AG04450 (cell line): ENCODE measurements at regions of chr9 and their contacts with region 1.

Region 1: DNA sequence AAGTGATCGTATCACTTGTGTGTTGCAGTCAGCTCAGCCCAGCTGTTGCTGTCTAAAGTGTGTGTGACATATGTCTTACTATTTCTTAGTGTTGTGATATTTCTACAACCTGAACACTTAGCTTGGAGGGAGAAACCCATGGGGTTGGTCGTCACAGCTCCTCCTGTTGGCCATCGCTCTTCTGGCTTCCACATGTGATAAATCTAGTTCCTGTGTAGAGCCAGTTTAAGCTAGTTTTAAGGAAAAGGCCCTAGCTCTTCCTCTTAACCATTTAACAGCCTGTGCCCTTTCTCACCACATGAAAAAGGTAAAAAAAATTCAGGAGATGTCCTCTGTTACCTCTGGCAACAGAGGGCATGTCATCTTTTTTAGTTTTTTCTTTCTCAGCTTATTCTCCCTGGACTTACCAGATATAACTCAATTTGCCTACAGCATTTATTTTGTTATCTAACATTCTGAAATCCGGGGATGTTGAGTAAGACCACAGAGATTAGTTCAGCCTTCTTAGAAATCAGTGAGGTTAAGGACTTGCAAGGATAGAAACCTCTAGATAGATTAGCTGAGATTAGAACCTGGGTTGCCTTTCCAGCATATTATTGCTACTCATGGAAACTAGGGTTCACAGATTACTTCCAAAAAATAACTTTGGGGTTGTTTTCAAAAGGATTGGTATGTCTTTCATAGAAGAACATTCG is 100.4 kb downstream of the GAPVD1 start:
- DNase-seq: no peak
- H3K4me3 ChIP-seq: no peak overlapping the region
- H3K27ac ChIP-seq: no peak overlapping the region
- H3K27me3 ChIP-seq: no peaks in the 10 kb centered on the region
- CTCF ChIP-seq: peak; percentile 43

Region 2: DNA sequence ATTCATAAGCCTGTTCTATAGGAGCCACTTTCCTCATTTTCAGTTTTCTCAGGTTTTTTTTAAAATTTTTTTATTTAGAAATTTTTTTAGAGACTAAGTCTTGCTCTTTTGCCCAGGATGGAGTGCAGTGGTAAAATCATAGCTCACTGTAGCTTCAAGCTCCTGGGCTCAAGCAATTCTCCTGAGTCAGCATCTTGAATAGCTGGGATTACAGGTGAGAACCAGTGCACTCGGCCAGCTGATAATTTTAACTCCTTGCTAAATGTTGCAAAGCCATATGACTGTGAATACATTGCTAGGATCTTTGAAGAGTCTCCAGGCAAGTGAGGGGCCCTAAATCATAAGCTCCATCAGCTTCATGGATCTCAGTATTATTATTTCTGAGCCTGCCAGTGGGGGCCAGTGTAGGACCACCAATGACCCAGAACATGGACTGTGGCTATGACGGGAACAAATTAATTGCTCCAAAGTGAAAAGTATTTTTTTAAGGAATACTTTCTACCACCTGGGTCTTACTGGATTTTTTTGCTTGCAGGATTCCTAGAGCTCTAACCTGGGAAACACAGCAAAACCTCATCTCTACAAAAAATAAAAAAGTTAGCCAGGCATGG is 106.1 kb before region 1 on chr9:
- CTCF ChIA-PET with region 1: interaction called, 21 read pairs
- POLR2A ChIA-PET with region 1: no interaction called
- DNase-seq: no peak
- H3K4me3 ChIP-seq: no peak overlapping the region
- H3K27ac ChIP-seq: no peak overlapping the region
- H3K27me3 ChIP-seq: no peaks in the 10 kb centered on the region
- CTCF ChIP-seq: peak; percentile 42

Region 3: DNA sequence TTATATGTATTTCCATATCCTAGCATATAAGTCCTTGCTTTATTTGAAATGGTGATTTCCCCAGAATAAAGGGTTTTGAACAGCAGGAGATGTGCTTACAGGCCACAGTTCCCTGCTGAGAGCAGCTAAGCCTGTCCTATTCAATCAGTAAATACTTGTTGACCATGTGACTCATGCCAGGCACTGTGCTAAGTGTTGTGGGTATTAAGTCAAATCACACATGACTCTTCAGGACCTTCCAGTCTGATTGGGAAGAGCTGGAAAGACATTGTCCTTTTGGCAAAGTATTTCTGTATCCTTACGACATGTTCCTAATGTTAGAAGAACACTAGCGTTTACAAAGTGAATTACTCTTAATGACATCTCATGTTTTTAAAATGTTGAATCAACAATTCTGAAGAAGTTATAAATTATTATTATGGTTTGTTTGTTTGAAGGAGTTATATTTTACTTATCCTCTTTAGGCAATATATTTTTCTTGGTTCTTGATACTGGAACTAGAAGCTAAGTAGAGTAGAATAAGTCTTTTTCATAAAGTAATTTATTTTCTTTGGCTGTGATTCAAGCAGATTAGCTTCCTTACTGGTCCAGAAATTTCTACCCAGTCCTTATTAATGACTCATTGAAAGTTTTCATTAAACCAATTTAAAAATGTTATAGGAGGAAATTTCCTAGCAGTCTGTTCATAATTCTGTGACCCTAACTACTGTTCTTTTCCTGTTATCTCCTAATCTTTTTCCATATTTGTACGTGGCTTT is 18.3 kb before region 1 on chr9:
- CTCF ChIA-PET with region 1: interaction called, 18 read pairs
- POLR2A ChIA-PET with region 1: no interaction called
- DNase-seq: peak; percentile 10
- H3K4me3 ChIP-seq: no peak overlapping the region
- H3K27ac ChIP-seq: no peak overlapping the region
- H3K27me3 ChIP-seq: no peaks in the 10 kb centered on the region
- CTCF ChIP-seq: no peak